HAP-1 (cell line): ENCODE measurements at regions of chr11 and their contacts with region 1.

Region 1: DNA sequence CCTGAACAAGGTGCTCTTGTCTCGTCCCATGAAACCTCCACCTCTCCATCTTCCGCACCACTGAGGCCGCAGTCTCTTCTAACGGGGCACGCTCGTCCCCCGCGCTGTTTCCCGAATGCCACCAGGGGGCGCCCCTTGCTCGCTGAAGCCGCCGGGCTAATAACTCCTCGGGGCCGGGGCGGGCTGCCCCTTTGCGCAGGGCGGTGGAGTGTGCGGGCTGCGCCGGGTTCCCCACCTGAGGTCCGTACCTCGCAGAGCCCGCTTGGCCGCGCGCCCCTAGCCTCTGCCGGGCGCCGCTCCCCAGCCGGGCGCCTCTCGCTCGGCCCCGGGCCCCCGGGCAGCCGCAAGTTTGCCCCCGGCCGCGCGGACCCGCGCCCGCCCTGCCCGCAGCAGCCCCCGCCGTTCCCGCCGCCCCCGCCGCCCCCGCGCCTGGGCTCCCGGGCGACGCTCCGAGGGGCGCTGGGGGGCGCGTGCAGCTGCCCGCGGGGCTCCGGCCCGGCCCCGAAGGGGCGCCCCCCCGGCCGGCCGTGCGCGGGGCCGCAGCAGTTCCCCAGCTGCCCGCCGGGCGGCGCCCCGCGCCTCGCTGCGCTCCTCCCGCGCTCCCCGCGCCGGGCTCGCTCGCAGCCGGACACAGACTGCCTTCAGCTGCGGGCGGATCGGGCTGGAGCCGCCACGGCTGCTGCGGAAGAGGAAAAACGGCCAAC is at the start of gene GRIK4:
- DNase-seq: peak; percentile 63 to 92
- H3K4me3 ChIP-seq: peak within 1 kb of the TSS; percentile 42
- H3K4me1 ChIP-seq: no peaks in the 10 kb centered on the region
- H3K27me3 ChIP-seq: no peaks in the 10 kb centered on the region

Region 2: DNA sequence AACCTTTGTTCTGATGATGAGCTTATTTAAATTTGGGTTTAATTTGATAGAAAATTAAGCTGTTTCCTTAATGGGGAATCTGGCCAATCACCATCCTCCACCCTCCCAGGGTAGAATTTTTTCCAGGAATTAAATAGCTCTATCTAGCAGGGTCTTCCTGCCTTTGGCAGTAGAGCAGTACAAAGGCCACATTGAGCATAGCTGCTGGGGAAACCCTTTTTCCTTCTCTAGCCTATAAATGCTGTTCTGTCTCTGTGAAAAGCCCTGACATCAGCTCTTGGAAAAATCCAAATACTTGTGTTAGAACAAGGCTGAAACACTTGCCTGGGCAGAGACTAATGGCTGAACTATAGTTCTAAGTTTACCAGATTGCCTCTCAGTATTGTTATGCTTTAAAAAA is 120.0 kb before region 1 on chr11:
- in situ Hi-C with region 1: no loop called
- DNase-seq: no peak
- H3K4me3 ChIP-seq: no peak overlapping the region
- H3K4me1 ChIP-seq: peaks cover 20% of the 10 kb centered on the region
- H3K27me3 ChIP-seq: no peaks in the 10 kb centered on the region

Region 3: GRCh38 chr11:120682866-120683265 is 171.6 kb after region 1 on chr11:
- in situ Hi-C with region 1: loop called (anchors 10 kb)
- DNase-seq: no peak
- H3K4me3 ChIP-seq: no peak overlapping the region
- H3K4me1 ChIP-seq: no peaks in the 10 kb centered on the region
- H3K27me3 ChIP-seq: no peaks in the 10 kb centered on the region

Region 4: GRCh38 chr11:120858740-120859139 is 347.5 kb after region 1 on chr11:
- in situ Hi-C with region 1: no loop called
- DNase-seq: no peak
- H3K4me3 ChIP-seq: no peak overlapping the region
- H3K4me1 ChIP-seq: peaks cover 8% of the 10 kb centered on the region
- H3K27me3 ChIP-seq: no peaks in the 10 kb centered on the region

Region 5: GRCh38 chr11:120952461-120953434 is 441.5 kb after region 1 on chr11:
- in situ Hi-C with region 1: loop called (anchors 5 kb)
- DNase-seq: peak; percentile 80 to 93
- H3K4me3 ChIP-seq: no peak overlapping the region
- H3K4me1 ChIP-seq: peaks cover 11% of the 10 kb centered on the region
- H3K27me3 ChIP-seq: no peaks in the 10 kb centered on the region

Region 6: GRCh38 chr11:121194731-121195596 is 683.7 kb after region 1 on chr11:
- in situ Hi-C with region 1: loop called (anchors 25 kb)
- DNase-seq: peak; percentile 52 to 80
- H3K4me3 ChIP-seq: no peak overlapping the region
- H3K4me1 ChIP-seq: peaks cover 12% of the 10 kb centered on the region; the same call in 1 of the 2 replicates
- H3K27me3 ChIP-seq: no peaks in the 10 kb centered on the region